A673 (cell line): ENCODE measurements at regions of chr15 and their contacts with region 1.

Region 1: DNA sequence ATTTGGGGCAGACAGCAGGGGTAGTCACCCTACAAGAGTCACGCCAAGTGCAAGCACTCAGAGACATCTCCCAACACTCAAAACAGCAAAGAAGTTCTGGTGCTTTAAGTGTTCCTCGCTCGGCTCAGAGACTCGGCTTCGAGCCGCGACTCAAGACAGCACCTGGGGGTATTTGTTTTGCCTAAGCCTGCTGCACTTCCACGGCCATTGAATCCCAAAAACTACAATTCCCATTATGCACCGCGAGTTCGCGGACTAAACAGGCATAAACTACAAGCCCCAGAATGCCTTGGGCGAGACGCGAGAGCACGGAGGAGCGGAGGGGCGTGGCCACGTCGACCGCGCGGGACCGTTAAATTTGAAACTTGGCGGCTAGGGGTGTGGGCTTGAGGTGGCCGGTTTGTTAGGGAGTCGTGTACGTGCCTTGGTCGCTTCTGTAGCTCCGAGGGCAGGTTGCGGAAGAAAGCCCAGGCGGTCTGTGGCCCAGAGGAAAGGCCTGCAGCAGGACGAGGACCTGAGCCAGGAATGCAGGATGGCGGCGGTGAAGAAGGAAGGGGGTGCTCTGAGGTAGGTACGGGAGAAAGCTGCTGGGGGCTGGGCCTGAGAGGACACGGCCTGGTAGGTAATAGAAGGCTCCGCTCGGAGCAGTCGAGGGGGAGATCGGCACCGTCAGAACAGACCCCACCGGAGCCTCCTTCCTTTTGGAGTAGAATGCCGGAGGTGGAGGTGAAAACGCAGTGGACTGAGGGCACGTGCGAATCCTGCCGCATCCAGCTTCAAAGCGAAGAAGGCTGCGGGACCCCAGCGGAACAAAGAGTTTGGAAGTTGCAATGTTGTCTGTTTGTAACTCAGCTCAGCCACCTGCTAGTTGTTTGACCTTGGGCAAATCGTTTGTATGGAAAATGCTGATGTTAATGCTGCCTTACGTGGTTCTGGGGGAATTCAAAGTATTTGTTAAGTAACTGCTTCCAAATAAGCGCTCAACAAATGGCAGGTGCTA is at the start of gene BUB1B:
- DNase-seq: peak; percentile 97
- H3K4me3 ChIP-seq: peak within 1 kb of the TSS; percentile 81
- H3K27ac ChIP-seq: peak within 1 kb of the TSS; percentile 79
- H3K4me1 ChIP-seq: peaks cover 17% of the 10 kb centered on the region
- H3K27me3 ChIP-seq: no peaks in the 10 kb centered on the region
- CTCF ChIP-seq: no peak
- total RNA-seq, gene BUB1B: 190 and 196 TPM in 2 replicates

Region 2: DNA sequence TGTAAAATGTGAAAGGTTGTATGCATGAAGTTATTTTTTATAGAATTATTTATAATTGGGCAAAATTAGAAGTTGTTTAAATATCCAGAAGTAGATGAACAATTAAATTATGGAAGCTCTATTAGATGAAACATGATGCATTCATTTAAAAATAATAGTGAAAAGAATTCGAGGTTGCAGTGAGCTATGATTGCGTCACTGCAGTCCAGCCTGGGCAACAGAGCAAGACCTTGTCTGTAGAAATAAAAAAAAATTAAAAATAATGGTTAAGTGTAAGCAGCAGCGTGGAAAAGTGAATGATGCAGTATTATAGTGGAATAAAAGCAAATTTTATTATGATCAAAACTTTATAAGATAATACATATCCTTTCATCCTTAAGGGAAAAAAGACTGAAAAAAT is 14.2 kb after region 1 on chr15:
- CTCF ChIA-PET with region 1: no interaction called
- POLR2A ChIA-PET with region 1: no interaction called
- intact Hi-C with region 1: no loop called
- DNase-seq: no peak
- H3K4me3 ChIP-seq: no peak overlapping the region
- H3K27ac ChIP-seq: no peak overlapping the region
- H3K4me1 ChIP-seq: no peaks in the 10 kb centered on the region
- H3K27me3 ChIP-seq: no peaks in the 10 kb centered on the region
- CTCF ChIP-seq: no peak

Region 3: DNA sequence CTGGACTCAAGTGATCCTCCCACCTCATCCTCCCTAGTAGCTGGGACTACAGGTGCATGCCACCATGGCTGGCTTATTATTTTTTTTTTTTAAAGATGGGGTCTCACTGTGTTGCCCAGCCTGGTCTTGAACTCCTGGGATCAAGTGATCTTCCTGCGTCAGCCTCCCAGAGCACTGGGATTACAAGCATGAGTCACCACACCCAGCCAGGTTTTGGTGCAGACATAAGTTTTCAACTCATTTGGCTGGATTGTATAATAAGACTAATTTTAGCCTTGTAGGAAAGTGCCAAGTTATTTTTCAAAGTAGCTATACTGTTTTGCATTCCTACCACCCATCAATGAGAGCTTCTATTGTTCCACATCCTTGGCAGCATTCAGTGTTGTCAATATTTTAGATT is 32.0 kb after region 1 on chr15:
- CTCF ChIA-PET with region 1: interaction called, 16 read pairs
- POLR2A ChIA-PET with region 1: no interaction called
- intact Hi-C with region 1: no loop called
- DNase-seq: peak; percentile 10
- H3K4me3 ChIP-seq: no peak overlapping the region
- H3K27ac ChIP-seq: no peak overlapping the region
- H3K4me1 ChIP-seq: no peaks in the 10 kb centered on the region
- H3K27me3 ChIP-seq: no peaks in the 10 kb centered on the region
- CTCF ChIP-seq: no peak